ENCODE measurements at regions of chr13 and their contacts with region 1.

Region 1: DNA sequence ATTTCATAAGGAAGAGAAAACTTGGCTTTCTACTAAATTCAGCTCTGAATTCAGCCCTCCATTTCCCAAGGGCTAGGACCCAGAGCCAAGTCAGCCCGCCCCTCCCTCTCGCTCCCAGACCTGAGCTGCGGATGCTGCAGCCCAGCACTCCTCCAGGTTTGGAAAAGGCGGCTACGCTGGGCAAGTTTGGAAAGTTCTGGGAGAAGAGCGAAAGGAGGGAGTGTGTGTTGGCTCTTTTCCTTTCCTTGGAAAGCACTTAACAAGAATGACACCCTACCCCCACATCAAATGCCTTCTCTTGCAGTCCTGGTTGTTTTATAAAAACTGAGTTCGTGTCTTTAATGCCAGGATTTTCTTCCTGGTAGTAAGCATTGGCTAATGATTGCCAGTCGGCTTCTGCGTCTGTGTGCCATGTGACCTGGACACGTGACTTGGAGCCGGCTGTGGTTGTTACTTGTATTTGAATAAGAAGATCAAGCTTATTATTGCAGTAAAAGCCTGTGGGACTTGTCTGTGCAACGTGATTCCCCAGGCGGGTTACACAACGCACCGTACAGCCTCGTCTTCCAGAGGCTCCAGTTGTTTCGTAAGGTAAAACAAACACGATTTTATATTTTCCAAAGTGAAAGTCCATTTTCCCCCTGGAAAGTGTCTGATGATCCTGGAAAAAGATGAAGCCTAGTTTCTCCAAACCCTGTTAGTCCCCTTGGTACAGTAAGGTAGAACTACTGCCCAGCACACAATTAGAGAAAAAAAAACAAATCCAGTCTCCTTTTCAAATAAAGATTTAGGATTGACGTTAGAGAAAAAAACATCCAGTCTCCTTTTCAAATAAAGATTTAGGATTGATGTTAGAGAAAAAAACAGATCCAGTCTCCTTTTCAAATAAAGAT is 26.9 kb upstream of the UBE2L5 start:
- DNase-seq: peak in 1 of 2 donors; percentile 100
- H3K4me3 ChIP-seq: peak overlapping the region; percentile 45 to 62
- H3K27ac ChIP-seq: peak overlapping the region; percentile 94
- H3K4me1 ChIP-seq: peaks cover 17% of the 10 kb centered on the region
- H3K27me3 ChIP-seq: no peaks in the 10 kb centered on the region
- CTCF ChIP-seq: no peak
- POLR2A ChIP-seq: peak in 1 of 2 donors; percentile 30

Region 2: DNA sequence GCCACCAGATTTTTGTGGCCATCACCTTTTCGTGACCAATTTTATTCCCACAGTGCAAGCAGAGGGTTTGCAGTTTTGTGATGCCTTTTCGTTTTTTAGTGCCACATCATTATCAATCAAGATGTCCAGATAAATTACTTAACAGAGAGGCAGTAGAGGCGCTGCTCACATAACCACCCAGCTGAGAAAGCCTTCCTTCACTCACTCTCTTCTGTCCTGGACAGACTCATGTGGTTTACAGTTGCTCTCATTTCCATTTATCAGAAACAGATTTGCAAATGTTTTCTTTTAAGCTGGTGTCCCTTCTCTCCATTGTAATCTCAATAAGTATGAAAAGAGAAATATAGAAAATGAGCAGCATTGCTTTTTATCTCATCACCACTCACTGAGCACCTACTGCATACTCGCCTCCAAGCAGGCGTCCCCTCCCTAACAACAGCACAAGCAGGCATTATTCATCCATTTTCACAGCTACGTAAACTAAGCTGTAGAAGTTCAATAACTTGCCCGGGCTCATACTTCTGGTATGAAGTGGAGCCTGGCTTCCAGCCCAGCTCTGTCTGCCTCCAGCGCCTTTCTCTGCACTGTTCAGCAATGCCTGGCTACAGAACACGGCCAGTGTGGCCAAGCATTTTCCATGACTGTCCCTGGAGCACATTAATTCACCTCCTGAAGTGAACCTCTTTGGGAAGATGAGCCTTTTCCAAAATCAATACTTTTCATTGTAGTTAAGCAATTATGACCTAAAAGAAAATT is 53.4 kb before region 1 on chr13:
- intact Hi-C with region 1: loop called (anchors 10 kb)
- DNase-seq: peak in 1 of 2 donors; percentile 95
- H3K4me3 ChIP-seq: no peak overlapping the region
- H3K27ac ChIP-seq: peak overlapping the region; percentile 90
- H3K4me1 ChIP-seq: peaks cover 60% of the 10 kb centered on the region
- H3K27me3 ChIP-seq: no peaks in the 10 kb centered on the region
- CTCF ChIP-seq: no peak
- POLR2A ChIP-seq: no peak

Region 3: DNA sequence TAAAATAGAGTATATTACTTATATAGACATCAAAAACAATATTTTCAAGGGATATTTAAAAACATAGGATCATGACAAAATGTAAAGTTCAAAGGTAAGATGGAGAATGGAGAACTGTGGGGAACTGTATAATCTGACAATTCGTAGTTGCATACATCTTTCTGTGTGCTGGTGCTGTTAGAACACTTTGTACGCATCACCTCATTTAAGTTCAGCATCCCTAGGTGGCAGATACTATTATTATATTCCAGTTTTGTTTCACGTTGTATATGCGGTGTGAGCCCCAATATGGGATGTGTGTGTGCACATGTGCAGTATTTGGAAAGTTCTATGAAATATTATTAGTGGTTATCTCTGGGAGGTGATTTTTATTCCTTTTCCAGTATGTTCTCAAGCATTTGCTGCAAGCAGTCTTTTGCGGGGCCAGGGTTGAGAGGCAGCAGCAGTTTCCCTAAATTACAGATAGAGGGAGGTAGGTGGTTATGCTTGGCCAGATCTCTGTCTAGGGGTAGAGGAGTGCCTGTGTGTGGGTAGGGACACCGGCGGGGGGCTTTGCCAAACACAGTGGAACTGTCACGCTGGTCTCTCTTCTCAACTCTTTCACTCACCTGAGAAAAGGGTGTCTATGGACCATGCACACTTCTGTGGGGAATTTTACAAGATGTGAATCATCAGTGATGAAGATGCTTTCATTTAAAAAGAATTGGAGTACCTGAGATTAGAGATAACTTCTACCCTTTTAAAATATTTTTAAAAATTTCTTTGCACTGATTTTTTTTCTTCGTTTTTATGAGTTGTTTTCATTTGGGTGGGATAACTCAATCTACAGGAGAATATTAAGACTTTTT is 284.3 kb after region 1 on chr13:
- intact Hi-C with region 1: loop called (anchors 5 kb)
- DNase-seq: no peak
- H3K4me3 ChIP-seq: no peak overlapping the region
- H3K27ac ChIP-seq: no peak overlapping the region
- H3K4me1 ChIP-seq: peaks cover 5% of the 10 kb centered on the region
- H3K27me3 ChIP-seq: no peaks in the 10 kb centered on the region
- CTCF ChIP-seq: peak in 1 of 3 experiments; percentile 22
- POLR2A ChIP-seq: no peak

Region 4: GRCh38 chr13:31717583-31717982 is 1322.1 kb after region 1 on chr13:
- intact Hi-C with region 1: no loop called
- DNase-seq: no peak
- H3K4me3 ChIP-seq: no peak overlapping the region
- H3K27ac ChIP-seq: no peak overlapping the region
- H3K4me1 ChIP-seq: no peaks in the 10 kb centered on the region
- H3K27me3 ChIP-seq: no peaks in the 10 kb centered on the region
- CTCF ChIP-seq: no peak
- POLR2A ChIP-seq: no peak

Measured in vagina (tissue), 2 donors.